ENCODE measurements at regions of chr18 and their contacts with region 1.

Region 1: GRCh38 chr18:22913857-22914256 is 19.3 kb upstream of the RBBP8 start:
- DNase-seq: no peak
- H3K4me3 Mint-ChIP-seq: no peak overlapping the region
- H3K27ac Mint-ChIP-seq: no peak overlapping the region
- H3K4me1 Mint-ChIP-seq: no peaks in the 10 kb centered on the region
- H3K27me3 Mint-ChIP-seq: peaks cover 13% of the 10 kb centered on the region

Region 2: GRCh38 chr18:22933206-22933957 is 19.5 kb after region 1 on chr18 and contains the start of gene RBBP8:
- intact Hi-C with region 1: no loop called
- DNase-seq: peak; percentile 97
- H3K4me3 Mint-ChIP-seq: peak within 1 kb of the TSS; percentile 89
- H3K27ac Mint-ChIP-seq: peak within 1 kb of the TSS; percentile 96
- H3K4me1 Mint-ChIP-seq: peaks cover 21% of the 10 kb centered on the region
- H3K27me3 Mint-ChIP-seq: peaks cover 3% of the 10 kb centered on the region
- total RNA-seq, gene RBBP8: 97.8 TPM in 2 replicates

Region 3: DNA sequence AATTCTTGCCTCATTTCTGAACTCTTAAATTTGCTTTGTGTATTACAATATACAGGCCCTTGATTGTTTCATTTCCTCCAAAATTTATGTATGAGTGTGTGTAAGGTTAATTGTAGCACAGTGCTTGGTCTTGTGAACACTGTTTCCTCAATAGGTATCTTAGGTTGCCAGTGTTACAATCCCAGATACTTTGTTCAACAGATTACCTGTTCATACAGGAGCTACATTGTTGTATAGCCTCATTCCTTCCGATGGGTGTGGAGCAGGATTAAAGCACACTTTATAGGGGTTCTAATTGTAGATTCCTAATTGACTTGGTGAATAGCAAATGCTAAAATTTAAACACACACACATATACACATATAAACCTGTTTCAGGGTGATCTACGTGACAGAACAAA is 30.0 kb after region 1 on chr18:
- intact Hi-C with region 1: loop called (anchors 2 kb)
- DNase-seq: no peak
- H3K4me3 Mint-ChIP-seq: no peak overlapping the region
- H3K27ac Mint-ChIP-seq: no peak overlapping the region
- H3K4me1 Mint-ChIP-seq: peaks cover 10% of the 10 kb centered on the region
- H3K27me3 Mint-ChIP-seq: no peaks in the 10 kb centered on the region

Region 4: DNA sequence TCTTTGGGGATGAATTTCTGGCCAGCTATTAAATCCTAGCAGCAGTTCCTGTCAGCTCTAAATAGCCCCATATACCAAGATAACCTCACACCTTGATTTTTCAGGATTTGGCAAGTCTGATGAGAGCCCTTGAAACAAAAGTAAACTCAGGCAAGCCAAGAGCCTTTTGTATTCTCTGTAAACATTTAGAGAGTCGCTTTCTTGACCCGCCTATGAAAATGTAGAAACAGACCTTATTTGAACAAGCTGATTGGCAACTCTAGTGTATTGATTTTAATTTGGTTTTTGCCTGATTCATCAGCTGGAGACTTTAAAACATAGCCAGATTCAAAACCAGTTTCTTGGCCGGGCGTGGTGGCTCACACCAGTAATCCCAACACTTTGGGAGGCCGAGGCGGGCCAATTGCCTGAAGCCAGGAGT is 264.8 kb after region 1 on chr18:
- intact Hi-C with region 1: no loop called
- DNase-seq: no peak
- H3K4me3 Mint-ChIP-seq: no peak overlapping the region
- H3K27ac Mint-ChIP-seq: no peak overlapping the region
- H3K4me1 Mint-ChIP-seq: peaks cover 7% of the 10 kb centered on the region
- H3K27me3 Mint-ChIP-seq: peaks cover 7% of the 10 kb centered on the region

Measured in activated CD4-positive, alpha-beta T cell treated with anti-CD3 and anti-CD28 coated beads, Interleukin-2, amount 10 ng/mL, durations not matched to agents 24 days and 14 days (primary cell).